PC-3 (cell line): ENCODE measurements at regions of chr17 and their contacts with region 1.

Region 1: DNA sequence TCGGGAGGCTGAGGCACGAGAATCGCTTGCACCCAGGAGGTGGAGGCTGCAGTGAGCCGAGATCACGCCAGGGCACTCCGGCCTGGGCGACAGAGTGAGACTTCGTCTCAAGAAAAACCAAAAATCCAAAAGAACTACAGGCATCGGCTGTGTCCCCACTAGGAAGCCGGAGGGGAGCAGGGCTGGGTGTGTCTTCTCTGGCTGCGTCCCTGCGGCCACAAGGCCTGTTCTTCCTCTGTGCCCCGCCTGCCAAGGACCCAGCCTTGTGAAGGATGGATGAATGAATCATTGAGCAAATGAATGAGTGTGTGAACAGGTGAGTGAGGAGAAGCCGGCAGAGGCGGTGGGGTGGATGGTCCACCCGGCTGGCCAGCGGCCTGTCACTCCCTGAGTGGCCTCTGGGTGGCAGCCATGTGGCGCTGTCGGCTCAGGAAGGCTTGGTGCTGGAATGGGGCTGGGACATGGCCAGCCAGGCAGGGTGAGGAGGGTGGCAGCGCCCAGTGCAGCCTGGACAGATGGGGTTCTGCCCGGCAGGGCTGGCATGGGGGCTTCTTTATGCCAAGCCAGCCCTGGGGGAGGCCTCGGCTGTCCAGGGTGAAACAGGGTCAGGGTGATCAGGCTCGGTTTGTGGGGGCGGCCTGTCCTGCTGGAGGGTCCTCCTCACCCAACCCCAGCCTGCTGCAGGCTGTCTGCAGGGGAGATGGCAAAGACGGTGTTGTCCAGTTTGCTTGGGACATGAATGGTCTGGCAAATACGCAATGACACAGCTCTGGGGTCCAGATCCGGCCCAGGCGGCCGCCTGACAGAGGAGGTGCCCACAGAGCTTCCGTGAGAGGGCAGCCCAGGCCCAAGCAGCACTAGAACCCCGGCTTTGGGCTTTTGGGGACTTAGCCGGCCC is 21.7 kb downstream of the SLC25A10 start:
- DNase-seq: peak; percentile 96
- ATAC-seq: peak; percentile 73
- H3K4me3 ChIP-seq: peak overlapping the region; percentile 14; the same call in 1 of the 2 replicates
- H3K27ac ChIP-seq: peak overlapping the region; percentile 47
- H3K4me1 ChIP-seq: peaks cover 32% of the 10 kb centered on the region
- H3K27me3 ChIP-seq: no peaks in the 10 kb centered on the region
- CTCF ChIP-seq: peak; percentile 93

Region 2: DNA sequence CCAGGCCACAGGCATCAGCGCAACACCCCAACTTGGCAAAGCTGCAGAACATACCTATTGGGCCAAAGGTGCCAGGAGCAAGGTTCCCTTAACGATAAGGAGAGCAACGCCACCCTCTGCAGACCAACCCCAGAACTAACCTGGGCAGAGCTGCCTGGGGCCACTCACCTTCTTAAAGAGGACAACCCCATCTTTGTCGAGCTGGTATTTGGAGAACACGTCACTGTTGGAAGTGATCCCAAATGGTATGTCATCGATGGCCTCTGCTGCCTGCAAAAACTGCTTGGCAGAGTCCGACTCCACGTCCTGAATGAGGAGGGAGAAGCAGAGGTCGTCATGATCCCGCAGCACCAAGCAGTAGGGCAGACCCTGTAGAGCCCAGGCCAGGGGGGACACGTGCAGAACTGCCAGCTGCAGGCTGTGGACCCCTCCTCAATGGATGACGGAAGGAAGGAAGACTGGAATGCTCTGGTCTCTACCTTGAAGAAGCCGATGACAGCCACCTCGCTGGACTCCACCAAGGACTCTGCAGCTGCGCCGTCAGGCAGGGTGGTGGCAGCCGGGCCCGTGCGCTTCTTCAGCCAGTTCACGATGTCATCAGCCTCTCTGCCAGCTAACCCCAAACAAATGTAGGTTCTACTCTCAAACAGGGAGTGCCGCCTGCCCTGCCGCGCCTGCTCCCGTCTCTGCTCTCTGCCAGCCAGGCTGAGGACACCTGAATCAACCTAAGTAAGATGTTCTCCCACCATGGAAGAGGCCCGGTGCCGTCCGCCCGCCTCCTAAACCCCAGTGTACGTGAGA is 121.4 kb after region 1 on chr17:
- CTCF ChIA-PET with region 1: interaction called, 10 read pairs
- POLR2A ChIA-PET with region 1: no interaction called
- intact Hi-C with region 1: loop called (anchors 1 kb)
- DNase-seq: peak; percentile 57
- ATAC-seq: peak; percentile 14; the same call in 1 of the 2 replicates
- H3K4me3 ChIP-seq: no peak overlapping the region
- H3K27ac ChIP-seq: no peak overlapping the region
- H3K4me1 ChIP-seq: peaks cover 26% of the 10 kb centered on the region
- H3K27me3 ChIP-seq: no peaks in the 10 kb centered on the region
- CTCF ChIP-seq: peak; percentile 49; the same call in 1 of the 2 replicates

Region 3: DNA sequence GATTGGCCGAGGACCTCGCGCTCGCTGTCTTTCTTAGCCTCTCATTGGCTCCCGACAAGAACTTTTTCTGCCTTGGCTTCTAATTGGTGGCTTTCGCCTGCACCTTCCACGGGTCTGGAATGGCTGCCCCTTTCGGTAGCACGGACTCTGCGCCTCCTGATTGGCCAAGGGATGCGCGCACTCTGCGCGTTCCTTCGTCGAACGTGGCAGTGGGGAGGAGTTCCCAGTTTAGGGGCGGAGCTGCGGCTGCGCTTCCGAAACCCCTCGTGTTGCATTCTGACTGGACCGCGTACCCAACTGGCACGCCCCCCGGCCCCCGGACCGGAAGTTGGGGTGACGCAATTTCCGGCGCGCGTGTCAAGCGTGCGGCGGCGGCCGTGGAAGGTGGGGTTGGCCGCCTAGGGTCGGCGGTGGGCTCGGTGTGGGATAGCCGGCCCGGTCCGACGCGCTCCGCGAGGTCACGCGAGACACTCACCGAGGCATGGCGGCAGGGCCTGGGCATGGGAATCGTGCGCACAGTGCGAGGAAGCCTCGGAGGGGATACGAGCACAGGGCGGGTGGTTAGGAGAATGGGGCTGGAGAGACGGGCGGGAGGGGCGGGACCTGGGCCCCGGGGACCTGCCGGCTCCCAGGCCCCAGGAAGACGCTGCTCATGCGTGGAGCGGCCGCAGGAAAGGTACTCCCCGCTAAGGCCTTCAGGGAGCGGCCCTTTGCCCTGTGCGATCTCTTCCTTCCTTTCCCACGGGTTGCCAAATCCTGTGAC is 127.2 kb after region 1 on chr17:
- CTCF ChIA-PET with region 1: no interaction called
- POLR2A ChIA-PET with region 1: no interaction called
- intact Hi-C with region 1: loop called (anchors 1 kb)
- DNase-seq: peak; percentile 100
- ATAC-seq: peak; percentile 80
- H3K4me3 ChIP-seq: peak overlapping the region; percentile 93
- H3K27ac ChIP-seq: peak overlapping the region; percentile 73
- H3K4me1 ChIP-seq: peaks cover 37% of the 10 kb centered on the region
- H3K27me3 ChIP-seq: no peaks in the 10 kb centered on the region
- CTCF ChIP-seq: no peak

Region 4: GRCh38 chr17:81950501-81950900 is 216.7 kb after region 1 on chr17:
- CTCF ChIA-PET with region 1: no interaction called
- POLR2A ChIA-PET with region 1: interaction called, 10 read pairs
- intact Hi-C with region 1: no loop called
- DNase-seq: no peak
- ATAC-seq: no peak
- H3K4me3 ChIP-seq: no peak overlapping the region
- H3K27ac ChIP-seq: no peak overlapping the region
- H3K4me1 ChIP-seq: no peaks in the 10 kb centered on the region
- H3K27me3 ChIP-seq: no peaks in the 10 kb centered on the region
- CTCF ChIP-seq: no peak

Region 5: GRCh38 chr17:81967533-81968395 is 234.0 kb after region 1 on chr17:
- CTCF ChIA-PET with region 1: no interaction called
- POLR2A ChIA-PET with region 1: interaction called, 13 read pairs
- intact Hi-C with region 1: no loop called
- DNase-seq: peak; percentile 14
- ATAC-seq: peak; percentile 27; the same call in 1 of the 2 replicates
- H3K4me3 ChIP-seq: no peak overlapping the region
- H3K27ac ChIP-seq: no peak overlapping the region
- H3K4me1 ChIP-seq: no peaks in the 10 kb centered on the region
- H3K27me3 ChIP-seq: no peaks in the 10 kb centered on the region
- CTCF ChIP-seq: no peak